HCT116 (cell line): ENCODE measurements at regions of chr2 and their contacts with region 1.

Region 1: GRCh38 chr2:69724540-69725159 is 17.3 kb upstream of the ANXA4 start:
- DNase-seq: peak; percentile 62
- ATAC-seq: peak; percentile 90
- H3K4me3 ChIP-seq: peak overlapping the region; percentile 27 to 54
- H3K27ac ChIP-seq: no peak overlapping the region
- H3K4me1 ChIP-seq: peaks cover 0 to 4% of the 10 kb centered on the region in 2 experiments; a peak in 1 of 4 replicates
- H3K27me3 ChIP-seq: no peaks in the 10 kb centered on the region
- CTCF ChIP-seq: peak; percentile 83 to 91 (median 91)
- POLR2A ChIP-seq: no peak
- RAD21 ChIP-seq: peak; percentile 99

Region 2: DNA sequence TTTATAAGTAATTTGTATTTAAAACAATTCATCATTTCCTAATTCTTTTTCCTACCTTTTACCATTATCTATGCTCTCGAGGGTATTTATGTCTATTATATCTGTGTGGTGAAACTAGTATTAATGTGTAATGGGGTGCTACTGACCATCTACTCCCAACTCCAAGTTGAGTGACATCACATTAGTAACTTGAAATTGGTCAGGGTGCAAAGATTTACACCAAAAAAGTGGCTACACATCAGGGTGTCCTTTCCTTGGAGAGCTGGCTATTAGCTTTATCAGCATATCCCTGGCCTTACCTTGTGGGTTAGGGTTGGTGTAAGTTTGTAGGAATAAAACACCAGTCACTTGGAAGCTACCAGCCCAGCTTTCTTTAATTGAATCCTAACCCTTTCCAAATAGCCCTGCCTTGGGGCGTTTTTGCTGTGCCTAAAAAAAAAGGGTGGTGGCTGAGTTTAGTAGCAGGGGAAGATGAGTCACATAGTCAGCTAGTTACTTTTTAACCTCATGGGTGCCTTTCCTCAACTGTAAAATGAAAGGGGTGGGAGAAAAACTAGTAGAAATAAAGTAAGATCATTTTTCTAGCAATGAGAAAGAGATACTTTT is 31.3 kb after region 1 on chr2:
- CTCF ChIA-PET with region 1: interaction called, 14 read pairs
- POLR2A ChIA-PET with region 1: no interaction called
- RAD21 ChIA-PET with region 1: interaction called, 3 to 6 read pairs
- intact Hi-C with region 1: no loop called
- DNase-seq: peak; percentile 78
- ATAC-seq: peak; percentile 93
- H3K4me3 ChIP-seq: peak overlapping the region; percentile 24 to 48
- H3K27ac ChIP-seq: peak overlapping the region; percentile 53
- H3K4me1 ChIP-seq: peaks cover 18 to 33% of the 10 kb centered on the region in 2 experiments
- H3K27me3 ChIP-seq: no peaks in the 10 kb centered on the region
- CTCF ChIP-seq: no peak
- POLR2A ChIP-seq: no peak
- RAD21 ChIP-seq: 0 out of 2 replicates have a peak, but pooled peaks have one; percentile 26

Region 3: DNA sequence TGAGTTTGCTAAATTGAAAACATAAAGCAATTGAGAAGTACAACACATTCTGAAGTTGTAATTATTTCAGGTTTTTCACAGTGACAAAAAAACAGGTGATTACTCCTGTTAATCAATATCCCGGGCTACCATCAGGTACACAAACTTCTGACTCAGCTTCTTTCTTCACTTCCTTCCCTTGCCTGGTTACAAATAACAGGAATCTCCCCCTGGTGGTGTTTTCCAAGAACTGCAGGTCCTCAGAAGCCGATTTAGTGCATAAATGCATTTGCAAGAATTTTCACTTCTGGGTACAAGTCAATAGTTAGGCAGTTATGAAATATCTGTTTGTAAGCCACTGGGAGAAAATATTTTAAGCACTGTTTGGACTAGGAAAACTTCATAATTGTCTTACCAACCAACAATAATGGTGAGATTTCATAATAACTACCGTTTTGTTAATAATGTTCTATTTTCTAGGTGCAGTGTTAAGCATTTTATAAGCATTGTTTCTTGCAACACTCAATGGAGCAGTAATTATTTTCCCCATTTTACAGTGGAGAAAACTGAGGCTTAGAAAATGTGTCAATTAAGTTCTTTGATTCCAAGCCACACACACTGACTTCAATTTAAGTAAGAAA is 92.4 kb after region 1 on chr2:
- CTCF ChIA-PET with region 1: interaction called, 243 read pairs
- POLR2A ChIA-PET with region 1: interaction called, 3 read pairs
- RAD21 ChIA-PET with region 1: interaction called, 13 to 19 read pairs
- intact Hi-C with region 1: loop called (anchors 1 kb)
- DNase-seq: peak; percentile 85
- ATAC-seq: peak; percentile 75
- H3K4me3 ChIP-seq: no peak overlapping the region
- H3K27ac ChIP-seq: no peak overlapping the region
- H3K4me1 ChIP-seq: peaks cover 0 to 3% of the 10 kb centered on the region in 2 experiments; a peak in 1 of 4 replicates
- H3K27me3 ChIP-seq: no peaks in the 10 kb centered on the region
- CTCF ChIP-seq: peak; percentile 79 to 92 (median 87)
- POLR2A ChIP-seq: no peak
- RAD21 ChIP-seq: peak; percentile 87

Region 4: GRCh38 chr2:69893684-69894551 is 169.3 kb after region 1 on chr2 and contains the start of gene SNRNP27:
- CTCF ChIA-PET with region 1: interaction called, 18 read pairs
- POLR2A ChIA-PET with region 1: no interaction called
- RAD21 ChIA-PET with region 1: interaction called, 3 to 4 read pairs
- intact Hi-C with region 1: loop called (anchors 2 kb)
- DNase-seq: peak; percentile 67
- ATAC-seq: peak; percentile 90
- H3K4me3 ChIP-seq: peak within 1 kb of the TSS; percentile 71 to 89
- H3K27ac ChIP-seq: peak within 1 kb of the TSS; percentile 63
- H3K4me1 ChIP-seq: peaks cover 10 to 12% of the 10 kb centered on the region in 2 experiments
- H3K27me3 ChIP-seq: no peaks in the 10 kb centered on the region
- CTCF ChIP-seq: no peak
- POLR2A ChIP-seq: no peak
- RAD21 ChIP-seq: 0 out of 2 replicates have a peak, but pooled peaks have one; percentile 1
- total RNA-seq, gene SNRNP27: 44.4 TPM

Region 5: DNA sequence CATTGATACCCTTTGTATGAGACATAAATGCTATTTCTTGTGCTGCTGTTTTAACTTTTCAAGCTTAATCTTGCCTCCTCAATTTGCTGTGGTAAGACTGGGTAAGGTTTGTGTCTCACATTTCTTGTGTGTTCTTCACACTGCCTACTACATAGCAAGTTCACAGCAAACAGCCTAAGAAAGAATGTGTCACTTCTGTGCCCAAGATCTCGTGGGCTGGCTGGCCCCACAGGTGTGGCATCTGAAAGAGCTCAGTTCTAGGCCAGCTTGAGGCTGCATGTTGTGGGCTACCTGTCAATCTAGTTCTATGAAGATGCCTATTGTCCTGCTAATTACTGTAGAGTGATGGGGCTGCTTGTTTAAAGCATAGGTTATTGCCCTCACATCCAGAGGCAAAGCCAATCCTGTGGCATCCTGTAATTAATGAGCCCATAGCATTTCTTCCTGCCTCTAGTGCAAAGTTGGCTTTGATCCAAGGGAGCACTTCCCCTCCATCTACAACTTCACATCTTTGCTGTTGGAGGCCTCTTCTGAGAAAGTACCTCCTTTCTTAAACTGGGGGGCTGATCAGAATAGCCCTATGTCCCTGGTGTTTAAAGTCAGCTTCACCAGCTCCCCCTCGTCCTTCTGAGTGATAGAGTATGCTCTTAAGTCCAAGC is 277.7 kb after region 1 on chr2:
- CTCF ChIA-PET with region 1: no interaction called
- POLR2A ChIA-PET with region 1: no interaction called
- RAD21 ChIA-PET with region 1: no interaction called
- intact Hi-C with region 1: no loop called
- DNase-seq: no peak
- ATAC-seq: no peak
- H3K4me3 ChIP-seq: no peak overlapping the region
- H3K27ac ChIP-seq: no peak overlapping the region
- H3K4me1 ChIP-seq: peaks cover 15 to 25% of the 10 kb centered on the region in 2 experiments
- H3K27me3 ChIP-seq: no peaks in the 10 kb centered on the region
- CTCF ChIP-seq: no peak
- POLR2A ChIP-seq: no peak
- RAD21 ChIP-seq: no peak

Region 6: GRCh38 chr2:70070541-70071268 is 346.1 kb after region 1 on chr2:
- CTCF ChIA-PET with region 1: interaction called, 9 read pairs
- POLR2A ChIA-PET with region 1: no interaction called
- RAD21 ChIA-PET with region 1: interaction called in 1 of 2 experiments, 6 read pairs
- intact Hi-C with region 1: loop called (anchors 10 kb)
- DNase-seq: peak; percentile 69
- ATAC-seq: peak; percentile 99
- H3K4me3 ChIP-seq: no peak overlapping the region
- H3K27ac ChIP-seq: peak overlapping the region; percentile 65; the same call in 1 of the 2 replicates
- H3K4me1 ChIP-seq: peaks cover 5 to 8% of the 10 kb centered on the region in 2 experiments; a peak in 3 of 4 replicates
- H3K27me3 ChIP-seq: no peaks in the 10 kb centered on the region
- CTCF ChIP-seq: peak; percentile 73 to 82 (median 78)
- POLR2A ChIP-seq: no peak
- RAD21 ChIP-seq: peak; percentile 87

Region 7: GRCh38 chr2:70161069-70161534 is 436.5 kb after region 1 on chr2:
- CTCF ChIA-PET with region 1: no interaction called
- POLR2A ChIA-PET with region 1: no interaction called
- RAD21 ChIA-PET with region 1: no interaction called
- intact Hi-C with region 1: no loop called
- DNase-seq: no peak
- ATAC-seq: no peak
- H3K4me3 ChIP-seq: no peak overlapping the region
- H3K27ac ChIP-seq: no peak overlapping the region
- H3K4me1 ChIP-seq: 0 out of 4 replicates have a peak, but pooled peaks cover 0 to 2% of the 10 kb centered on the region in 2 experiments
- H3K27me3 ChIP-seq: no peaks in the 10 kb centered on the region
- CTCF ChIP-seq: no peak
- POLR2A ChIP-seq: no peak
- RAD21 ChIP-seq: no peak